Activated CD4-positive, alpha-beta T cell treated with anti-CD3 and anti-CD28 coated beads for 36 hours (primary cell): ENCODE measurements at regions of chr7 and their contacts with region 1.

Region 1: DNA sequence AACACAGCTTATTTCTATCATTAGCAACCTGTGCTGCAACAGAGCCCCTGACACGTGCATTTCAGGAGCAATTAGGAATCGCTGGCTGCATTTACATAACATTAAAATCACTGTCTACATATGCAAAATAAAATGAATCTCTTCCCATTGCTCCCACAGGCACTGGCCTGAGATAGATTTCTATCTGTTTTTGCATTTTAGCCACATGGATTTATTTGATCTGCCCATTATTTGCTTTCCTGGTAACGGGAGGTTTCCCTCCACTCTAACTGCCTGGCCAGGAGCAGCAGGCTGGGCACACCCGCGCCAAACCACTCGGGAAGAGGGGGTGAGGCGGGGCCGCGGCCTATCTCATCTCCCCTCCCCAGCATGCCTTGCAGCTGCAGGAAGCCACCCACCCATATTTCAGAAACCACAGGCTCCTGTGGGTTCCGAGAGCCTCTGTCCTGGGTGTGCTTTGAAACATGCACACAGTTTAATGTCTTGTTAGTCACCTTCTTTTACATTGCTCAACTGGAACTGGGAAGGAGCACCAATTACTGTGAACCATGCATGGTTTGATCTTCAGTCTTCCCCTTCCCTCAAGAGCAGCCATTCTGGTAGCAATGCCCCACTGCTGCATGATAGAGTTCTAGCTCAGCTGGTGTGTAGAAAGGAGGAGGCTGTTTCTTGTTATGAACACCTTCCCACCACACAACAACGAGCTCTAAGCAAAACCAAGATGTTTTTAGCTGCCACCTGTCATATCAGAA is 37.7 kb upstream of the IKZF1 start:
- DNase-seq: peak; percentile 87
- ATAC-seq: peak; percentile 77
- H3K4me3 Mint-ChIP-seq: peak overlapping the region; percentile 58
- H3K27ac Mint-ChIP-seq: peak overlapping the region; percentile 98
- H3K4me1 Mint-ChIP-seq: peaks cover 94% of the 10 kb centered on the region
- H3K27me3 Mint-ChIP-seq: no peaks in the 10 kb centered on the region

Region 2: GRCh38 chr7:50206453-50207250 is 60.2 kb before region 1 on chr7:
- CTCF ChIA-PET with region 1: interaction called, 27 read pairs
- POLR2A ChIA-PET with region 1: interaction called, 6 read pairs
- intact Hi-C with region 1: loop called (anchors 1 kb)
- DNase-seq: peak; percentile 86
- ATAC-seq: peak; percentile 67
- H3K4me3 Mint-ChIP-seq: peak overlapping the region; percentile 52
- H3K27ac Mint-ChIP-seq: peak overlapping the region; percentile 89
- H3K4me1 Mint-ChIP-seq: peaks cover 97% of the 10 kb centered on the region
- H3K27me3 Mint-ChIP-seq: no peaks in the 10 kb centered on the region

Region 3: GRCh38 chr7:50293509-50294179 is 26.8 kb after region 1 on chr7:
- CTCF ChIA-PET with region 1: interaction called, 5 read pairs
- POLR2A ChIA-PET with region 1: no interaction called
- intact Hi-C with region 1: loop called (anchors 1 kb)
- DNase-seq: no peak
- ATAC-seq: no peak
- H3K4me3 Mint-ChIP-seq: no peak overlapping the region
- H3K27ac Mint-ChIP-seq: no peak overlapping the region
- H3K4me1 Mint-ChIP-seq: peaks cover 32% of the 10 kb centered on the region
- H3K27me3 Mint-ChIP-seq: no peaks in the 10 kb centered on the region

Region 4: DNA sequence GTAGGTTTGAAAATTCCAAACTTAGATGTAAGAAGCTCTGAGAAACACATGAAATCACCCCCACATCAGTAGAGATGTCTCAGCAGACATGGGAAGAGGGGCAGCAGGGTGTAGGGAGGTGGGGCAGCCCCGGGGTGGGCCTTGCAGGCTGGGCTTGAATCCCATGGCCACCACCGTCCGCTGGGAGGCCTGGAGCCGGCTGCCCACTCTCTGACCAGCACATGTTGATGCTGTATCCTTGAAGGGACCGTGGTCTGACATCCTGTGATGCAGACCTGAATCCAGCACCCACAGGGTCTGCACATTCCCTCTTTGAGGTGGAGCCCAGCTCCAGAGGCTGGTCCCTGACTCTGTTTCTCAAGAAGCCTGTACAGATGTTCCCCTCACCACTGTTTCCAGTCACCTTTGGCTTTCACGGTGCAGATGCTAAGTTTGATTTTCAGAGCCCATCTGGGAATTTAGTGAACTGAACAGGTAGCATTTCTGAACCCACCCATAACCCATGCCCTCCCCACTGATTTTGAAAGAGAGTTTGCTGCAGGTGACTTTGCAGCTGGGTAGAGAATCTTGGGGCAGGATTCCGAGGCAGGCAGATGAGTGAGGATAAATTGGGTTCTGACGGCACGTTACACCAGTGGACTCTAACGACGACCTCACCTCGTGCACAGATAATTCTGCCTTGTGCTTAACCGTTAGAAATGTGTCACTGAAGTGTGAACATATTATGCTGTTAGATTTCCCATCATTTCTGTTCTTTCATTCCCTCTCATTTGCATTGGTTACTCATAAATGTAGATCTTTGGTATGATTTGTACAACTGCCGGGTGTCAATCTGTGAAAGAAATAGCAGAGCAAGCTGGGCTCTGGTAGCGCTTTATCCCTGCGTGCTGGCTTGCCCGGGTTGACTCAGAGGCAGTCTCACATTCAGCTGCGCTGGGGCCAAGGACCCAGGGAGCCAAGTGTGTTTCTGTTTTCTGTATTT is 83.4 kb after region 1 on chr7:
- CTCF ChIA-PET with region 1: interaction called, 5 read pairs
- POLR2A ChIA-PET with region 1: interaction called, 5 read pairs
- intact Hi-C with region 1: loop called (anchors 1 kb)
- DNase-seq: peak; percentile 93
- ATAC-seq: peak; percentile 71
- H3K4me3 Mint-ChIP-seq: peak overlapping the region; percentile 61
- H3K27ac Mint-ChIP-seq: peak overlapping the region; percentile 100
- H3K4me1 Mint-ChIP-seq: peaks cover 97% of the 10 kb centered on the region
- H3K27me3 Mint-ChIP-seq: no peaks in the 10 kb centered on the region

Region 5: DNA sequence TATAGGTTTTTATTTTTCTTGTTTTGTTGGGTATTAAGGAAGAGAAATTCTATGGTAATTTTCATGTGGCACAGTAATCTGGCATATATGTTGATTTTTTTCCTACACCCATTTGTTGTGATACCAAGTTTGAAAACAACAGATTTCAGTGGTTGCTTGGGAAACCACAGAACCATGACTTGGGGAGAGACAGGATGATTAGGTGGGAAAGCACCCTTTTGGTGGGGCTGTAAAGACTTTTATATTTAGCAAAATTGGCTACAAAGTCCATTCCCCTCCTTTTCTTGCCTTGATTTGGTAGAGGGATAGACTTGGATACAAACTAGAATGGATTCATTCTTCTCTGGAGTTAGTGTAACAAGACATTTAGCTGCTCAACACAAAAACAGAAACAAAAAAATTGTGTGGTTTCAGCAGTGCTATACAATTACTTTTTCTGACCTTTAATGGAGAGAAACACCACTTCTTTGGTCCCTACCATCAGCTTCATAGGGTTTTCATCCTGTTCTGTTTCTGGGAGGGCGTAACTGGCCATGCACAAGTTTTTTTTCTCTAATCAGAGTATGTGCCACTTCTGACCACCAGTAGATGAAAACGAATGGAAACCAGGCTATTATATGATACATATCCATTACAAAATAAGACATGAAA is 130.6 kb after region 1 on chr7:
- CTCF ChIA-PET with region 1: no interaction called
- POLR2A ChIA-PET with region 1: no interaction called
- intact Hi-C with region 1: loop called in 1 of 2 experiments (anchors 1 kb)
- DNase-seq: peak; percentile 63
- ATAC-seq: peak; percentile 12
- H3K4me3 Mint-ChIP-seq: peak overlapping the region; percentile 26
- H3K27ac Mint-ChIP-seq: peak overlapping the region; percentile 82
- H3K4me1 Mint-ChIP-seq: peaks cover 80% of the 10 kb centered on the region
- H3K27me3 Mint-ChIP-seq: no peaks in the 10 kb centered on the region